Activated B cell treated with CpG ODN at 0.5 μM for 24 hours (primary cell): ENCODE measurements at regions of chr2 and their contacts with region 1.

Region 1: GRCh38 chr2:119826370-119826961 is 66.7 kb downstream of the PTPN4 start:
- DNase-seq: no peak
- ATAC-seq: no peak
- H3K4me3 Mint-ChIP-seq: no peak overlapping the region
- H3K27ac Mint-ChIP-seq: no peak overlapping the region
- H3K4me1 Mint-ChIP-seq: peaks cover 8% of the 10 kb centered on the region
- H3K27me3 Mint-ChIP-seq: no peaks in the 10 kb centered on the region
- CTCF ChIP-seq: no peak

Region 2: DNA sequence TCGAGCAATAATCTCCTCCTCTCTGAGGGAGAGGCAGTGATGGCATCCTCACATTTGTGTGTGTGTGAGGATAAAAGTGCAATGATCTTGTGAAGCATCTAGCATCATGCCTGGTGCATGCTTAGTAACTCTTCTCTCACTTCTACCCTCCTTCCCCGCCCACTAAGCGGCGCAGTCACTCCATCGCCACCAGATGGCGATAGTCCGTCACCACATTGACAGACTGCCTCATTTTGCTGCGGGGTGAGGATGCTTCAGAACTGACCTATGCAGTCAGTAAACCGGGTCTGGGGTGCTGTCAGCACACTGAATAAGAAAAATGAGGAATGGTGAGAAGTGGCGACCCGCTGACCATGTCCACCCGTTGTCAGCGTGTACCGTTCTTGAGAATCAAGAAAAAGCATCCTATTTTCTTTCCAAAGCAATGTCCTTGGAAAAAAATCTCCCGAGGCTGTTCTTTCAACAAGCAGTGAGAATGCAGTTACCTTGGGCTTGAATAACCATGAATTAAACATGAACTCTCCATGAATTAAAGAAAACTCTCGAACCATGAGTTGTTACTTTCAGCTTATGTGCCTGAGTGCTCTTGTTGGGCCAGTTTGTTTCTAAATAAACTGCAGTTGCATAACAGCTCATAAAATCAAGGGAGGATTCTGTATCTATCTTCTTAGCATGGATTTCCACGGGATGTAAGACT is 184.8 kb before region 1 on chr2:
- CTCF ChIA-PET with region 1: interaction called, 3 read pairs
- POLR2A ChIA-PET with region 1: no interaction called
- intact Hi-C with region 1: loop called (anchors 1 kb)
- DNase-seq: peak; percentile 55
- ATAC-seq: peak; percentile 100
- H3K4me3 Mint-ChIP-seq: no peak overlapping the region
- H3K27ac Mint-ChIP-seq: no peak overlapping the region
- H3K4me1 Mint-ChIP-seq: peaks cover 4% of the 10 kb centered on the region
- H3K27me3 Mint-ChIP-seq: peaks cover 10% of the 10 kb centered on the region
- CTCF ChIP-seq: peak; percentile 90

Region 3: GRCh38 chr2:119702918-119703401 is 123.5 kb before region 1 on chr2:
- CTCF ChIA-PET with region 1: interaction called, 6 read pairs
- POLR2A ChIA-PET with region 1: no interaction called
- intact Hi-C with region 1: loop called (anchors 1 kb)
- DNase-seq: peak; percentile 52
- ATAC-seq: peak; percentile 97
- H3K4me3 Mint-ChIP-seq: no peak overlapping the region
- H3K27ac Mint-ChIP-seq: no peak overlapping the region
- H3K4me1 Mint-ChIP-seq: peaks cover 2% of the 10 kb centered on the region
- H3K27me3 Mint-ChIP-seq: peaks cover 6% of the 10 kb centered on the region
- CTCF ChIP-seq: peak; percentile 69

Region 4: DNA sequence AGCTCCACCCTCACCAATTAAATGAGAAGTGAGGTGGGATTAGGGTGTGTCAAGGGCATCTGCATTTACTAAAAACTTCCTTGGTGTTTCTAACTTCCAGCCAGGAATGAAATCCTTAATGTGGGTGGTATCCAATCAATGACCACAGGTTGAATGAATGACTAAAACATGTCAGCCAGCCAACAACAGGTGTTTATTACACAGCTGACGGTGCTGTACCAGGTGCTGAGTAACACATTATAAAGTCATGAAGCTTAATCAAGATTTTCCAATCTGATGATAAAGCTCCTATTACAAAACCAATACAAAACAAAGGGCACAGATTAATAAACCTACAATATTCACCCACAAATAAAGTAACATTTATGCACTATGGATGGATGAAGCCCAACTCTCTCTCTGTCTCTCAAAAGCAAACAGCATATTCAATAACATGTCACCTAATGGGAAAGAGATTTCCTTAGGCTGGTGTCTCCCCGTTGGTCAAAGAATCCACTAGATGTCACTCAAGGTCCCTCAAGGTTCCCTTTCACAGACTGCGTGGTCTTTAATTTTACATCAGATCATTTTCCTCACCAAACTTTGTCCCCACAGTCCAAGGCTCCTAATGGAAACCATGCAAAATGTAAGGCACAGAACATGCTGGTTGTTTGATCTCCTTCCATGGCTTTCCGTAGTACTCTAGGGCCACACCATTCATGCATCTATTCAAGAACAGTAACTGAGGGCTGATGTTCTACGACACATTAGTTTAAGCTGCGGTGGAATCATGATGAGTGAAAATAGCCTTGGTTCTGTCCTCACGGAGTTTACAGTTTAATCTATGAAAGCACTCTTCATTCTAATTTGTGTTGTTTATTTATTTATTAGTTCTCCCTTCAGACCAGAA is 73.2 kb before region 1 on chr2:
- CTCF ChIA-PET with region 1: interaction called, 17 read pairs
- POLR2A ChIA-PET with region 1: no interaction called
- intact Hi-C with region 1: loop called (anchors 1 kb)
- DNase-seq: no peak
- ATAC-seq: peak; percentile 47
- H3K4me3 Mint-ChIP-seq: no peak overlapping the region
- H3K27ac Mint-ChIP-seq: no peak overlapping the region
- H3K4me1 Mint-ChIP-seq: no peaks in the 10 kb centered on the region
- H3K27me3 Mint-ChIP-seq: no peaks in the 10 kb centered on the region
- CTCF ChIP-seq: peak; percentile 42

Region 5: DNA sequence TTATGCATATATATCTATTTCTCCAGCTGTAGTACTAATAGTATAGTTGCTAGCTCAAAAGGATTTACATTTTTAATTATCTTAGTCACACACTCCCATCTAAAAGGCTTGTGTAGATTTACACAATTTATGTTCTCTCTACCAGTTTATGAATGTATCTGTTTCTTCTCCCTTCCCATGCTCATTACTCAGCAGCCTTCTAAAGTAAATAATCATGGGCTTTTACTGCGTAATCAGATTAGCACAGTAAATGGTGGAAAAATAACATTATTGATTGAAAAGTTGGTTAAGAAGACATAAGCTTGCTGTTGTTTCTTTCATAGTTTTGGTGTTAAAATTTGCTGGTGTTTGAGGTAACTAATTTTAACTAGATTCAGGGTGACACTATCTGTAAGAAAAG is 15.1 kb after region 1 on chr2:
- CTCF ChIA-PET with region 1: no interaction called
- POLR2A ChIA-PET with region 1: no interaction called
- intact Hi-C with region 1: loop called (anchors 2 kb)
- DNase-seq: no peak
- ATAC-seq: no peak
- H3K4me3 Mint-ChIP-seq: no peak overlapping the region
- H3K27ac Mint-ChIP-seq: no peak overlapping the region
- H3K4me1 Mint-ChIP-seq: peaks cover 16% of the 10 kb centered on the region
- H3K27me3 Mint-ChIP-seq: no peaks in the 10 kb centered on the region
- CTCF ChIP-seq: no peak

Region 6: DNA sequence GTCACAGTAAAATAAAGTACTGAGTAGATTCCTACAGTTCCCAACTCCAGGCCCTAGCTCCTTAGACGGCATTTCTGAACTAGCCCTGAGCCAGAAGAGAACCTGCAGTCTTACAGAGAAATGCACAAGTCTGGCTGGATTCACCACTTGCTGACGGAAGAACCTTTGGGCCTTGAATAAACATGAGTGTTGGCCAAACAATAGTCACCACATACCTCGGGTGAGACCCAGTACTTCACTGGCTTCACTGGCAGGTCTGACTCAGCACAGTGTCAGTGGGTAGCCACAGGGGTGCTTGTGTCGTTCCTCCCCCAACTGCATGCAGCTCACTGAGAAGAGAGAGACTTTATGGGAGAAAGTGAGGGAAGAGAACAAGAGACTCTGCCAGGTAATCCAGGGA is 307.8 kb after region 1 on chr2:
- CTCF ChIA-PET with region 1: no interaction called
- POLR2A ChIA-PET with region 1: no interaction called
- intact Hi-C with region 1: no loop called
- DNase-seq: no peak
- ATAC-seq: no peak
- H3K4me3 Mint-ChIP-seq: no peak overlapping the region
- H3K27ac Mint-ChIP-seq: no peak overlapping the region
- H3K4me1 Mint-ChIP-seq: no peaks in the 10 kb centered on the region
- H3K27me3 Mint-ChIP-seq: no peaks in the 10 kb centered on the region
- CTCF ChIP-seq: no peak